ENCODE measurements at regions of chr10 and their contacts with region 1.

Region 1: GRCh38 chr10:102283488-102283887 is 38.2 kb downstream of the GBF1 start:
- DNase-seq: peak; percentile 40
- H3K4me3 Mint-ChIP-seq: peak overlapping the region; percentile 46
- H3K27ac Mint-ChIP-seq: peak overlapping the region; percentile 93
- H3K4me1 Mint-ChIP-seq: peaks cover 85% of the 10 kb centered on the region
- H3K27me3 Mint-ChIP-seq: no peaks in the 10 kb centered on the region

Region 2: GRCh38 chr10:102153093-102153620 is 130.3 kb before region 1 on chr10:
- CTCF ChIA-PET with region 1: no interaction called
- POLR2A ChIA-PET with region 1: no interaction called
- intact Hi-C with region 1: no loop called
- DNase-seq: no peak
- H3K4me3 Mint-ChIP-seq: peak overlapping the region; percentile 96
- H3K27ac Mint-ChIP-seq: peak overlapping the region; percentile 98
- H3K4me1 Mint-ChIP-seq: peaks cover 60% of the 10 kb centered on the region
- H3K27me3 Mint-ChIP-seq: no peaks in the 10 kb centered on the region

Region 3: GRCh38 chr10:102185811-102186527 is 97.5 kb before region 1 on chr10:
- CTCF ChIA-PET with region 1: no interaction called
- POLR2A ChIA-PET with region 1: no interaction called
- intact Hi-C with region 1: loop called (anchors 5 kb)
- DNase-seq: no peak
- H3K4me3 Mint-ChIP-seq: no peak overlapping the region
- H3K27ac Mint-ChIP-seq: no peak overlapping the region
- H3K4me1 Mint-ChIP-seq: peaks cover 14% of the 10 kb centered on the region
- H3K27me3 Mint-ChIP-seq: no peaks in the 10 kb centered on the region

Region 4: DNA sequence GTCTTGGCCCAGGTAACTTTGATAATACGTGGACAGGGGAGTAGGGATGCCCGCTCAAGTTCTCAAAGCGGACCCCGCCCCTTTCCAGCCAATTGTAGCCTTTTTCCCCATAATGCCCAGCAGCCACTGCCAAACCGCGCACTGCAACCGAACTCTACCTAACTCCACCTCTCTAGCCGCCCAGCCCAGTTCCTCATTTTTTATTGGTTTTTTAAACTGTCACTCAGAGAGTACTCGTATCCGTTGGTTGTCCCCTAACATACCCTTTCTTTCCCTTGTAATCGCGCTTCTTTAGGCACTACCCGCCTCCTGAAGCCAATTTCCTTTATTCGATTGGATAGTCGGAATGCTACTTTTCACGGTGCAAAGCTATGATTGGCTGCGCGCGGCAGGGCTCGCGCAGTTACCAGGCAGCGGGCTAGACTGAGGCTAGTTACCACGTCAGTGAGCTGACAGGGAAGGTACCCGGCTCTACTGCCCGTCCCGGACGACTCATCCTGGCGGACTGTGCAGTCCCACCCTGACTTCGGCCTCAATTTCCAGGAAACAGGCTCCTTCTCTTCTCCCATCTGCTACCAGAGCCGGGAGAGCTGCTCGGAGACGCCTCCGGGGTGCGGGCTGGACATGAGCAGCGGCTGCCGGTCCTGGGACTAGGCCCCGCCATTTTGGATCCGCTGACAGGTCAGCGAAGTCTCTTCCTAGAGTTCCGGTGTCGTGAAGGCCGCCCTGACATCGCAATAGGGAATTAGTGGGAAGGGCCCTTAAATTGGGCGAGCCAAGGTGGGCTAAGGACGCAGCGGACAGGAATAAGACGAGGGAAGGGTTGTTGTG is 38.2 kb before region 1 on chr10 and contains the start of gene GBF1:
- CTCF ChIA-PET with region 1: interaction called, 7 read pairs
- POLR2A ChIA-PET with region 1: interaction called, 8 read pairs
- intact Hi-C with region 1: loop called (anchors 2 kb)
- DNase-seq: peak; percentile 95
- H3K4me3 Mint-ChIP-seq: peak within 1 kb of the TSS; percentile 100
- H3K27ac Mint-ChIP-seq: peak within 1 kb of the TSS; percentile 95
- H3K4me1 Mint-ChIP-seq: peaks cover 51% of the 10 kb centered on the region
- H3K27me3 Mint-ChIP-seq: peaks cover 15% of the 10 kb centered on the region
- total RNA-seq, gene GBF1: 42.2 to 44.0 TPM

Region 5: GRCh38 chr10:102268375-102268888 is 15.1 kb before region 1 on chr10:
- CTCF ChIA-PET with region 1: interaction called, 13 read pairs
- POLR2A ChIA-PET with region 1: interaction called, 63 read pairs
- intact Hi-C with region 1: loop called (anchors 1 kb)
- DNase-seq: no peak
- H3K4me3 Mint-ChIP-seq: peak overlapping the region; percentile 41
- H3K27ac Mint-ChIP-seq: peak overlapping the region; percentile 97
- H3K4me1 Mint-ChIP-seq: peaks cover 73% of the 10 kb centered on the region
- H3K27me3 Mint-ChIP-seq: no peaks in the 10 kb centered on the region

Region 6: DNA sequence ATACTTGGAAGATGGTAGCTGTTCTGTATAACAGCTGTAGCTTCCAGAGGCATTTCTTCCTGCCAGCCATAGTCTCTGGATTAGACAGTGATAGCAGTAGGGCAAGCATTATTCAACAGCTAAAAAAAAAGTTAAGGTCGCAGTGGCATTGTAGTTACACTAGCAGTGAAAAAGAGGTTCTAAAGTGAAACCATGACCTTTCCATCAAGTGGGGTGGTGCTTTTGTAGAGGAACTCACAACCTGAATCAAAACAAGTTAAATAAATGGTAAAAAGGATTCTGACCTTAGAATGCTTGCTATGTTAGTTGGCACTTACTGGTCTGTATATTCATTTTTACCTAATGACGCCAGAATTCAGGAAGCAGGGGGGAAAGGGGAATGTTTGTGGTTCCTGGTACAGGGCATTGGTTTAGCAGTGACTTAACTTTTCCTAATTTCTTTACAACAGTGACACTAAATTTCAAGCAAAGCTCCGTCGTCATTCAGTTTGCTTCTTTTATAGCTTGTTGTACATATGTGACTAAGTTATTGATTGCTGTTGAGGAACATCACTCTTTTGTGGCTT is 16.9 kb after region 1 on chr10:
- CTCF ChIA-PET with region 1: interaction called, 4 read pairs
- POLR2A ChIA-PET with region 1: interaction called, 7 read pairs
- intact Hi-C with region 1: loop called (anchors 1 kb)
- DNase-seq: no peak
- H3K4me3 Mint-ChIP-seq: peak overlapping the region; percentile 23
- H3K27ac Mint-ChIP-seq: peak overlapping the region; percentile 86
- H3K4me1 Mint-ChIP-seq: peaks cover 32% of the 10 kb centered on the region
- H3K27me3 Mint-ChIP-seq: no peaks in the 10 kb centered on the region

Region 7: DNA sequence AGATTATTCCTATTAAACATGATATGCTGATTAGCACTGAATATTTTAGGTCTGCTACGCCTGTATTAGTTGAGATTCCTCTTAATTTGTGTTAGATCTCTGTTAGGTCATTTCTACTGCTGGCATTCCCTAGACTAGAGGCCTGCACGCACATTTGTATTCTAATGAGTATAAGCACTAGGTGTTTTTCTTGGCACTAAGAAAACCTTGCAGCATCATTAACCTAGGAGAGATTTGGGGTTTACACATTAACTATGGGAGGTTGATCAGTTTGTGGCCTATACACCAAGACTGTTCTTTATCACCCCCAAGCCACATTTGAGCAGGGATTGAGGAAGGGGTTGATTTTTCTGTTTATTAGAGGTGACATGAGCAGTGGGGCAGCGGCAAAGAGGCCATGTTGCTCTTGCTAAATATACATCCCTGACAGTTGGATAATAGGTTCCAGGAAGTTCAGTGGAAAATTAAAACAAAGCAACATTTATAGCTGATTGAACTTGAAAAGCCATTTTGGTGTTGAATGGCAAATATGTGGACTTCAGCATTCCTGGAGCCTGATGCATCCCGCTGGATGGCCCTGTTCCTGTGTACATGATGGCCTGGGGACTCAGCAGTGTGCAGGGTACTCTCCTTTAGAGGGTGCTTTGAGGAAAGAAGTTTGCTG is 27.0 kb after region 1 on chr10:
- CTCF ChIA-PET with region 1: no interaction called
- POLR2A ChIA-PET with region 1: interaction called, 6 read pairs
- intact Hi-C with region 1: loop called (anchors 1 kb)
- DNase-seq: no peak
- H3K4me3 Mint-ChIP-seq: no peak overlapping the region
- H3K27ac Mint-ChIP-seq: no peak overlapping the region
- H3K4me1 Mint-ChIP-seq: peaks cover 56% of the 10 kb centered on the region
- H3K27me3 Mint-ChIP-seq: no peaks in the 10 kb centered on the region

Region 8: GRCh38 chr10:102342958-102343357 is 59.5 kb after region 1 on chr10:
- CTCF ChIA-PET with region 1: interaction called, 5 read pairs
- POLR2A ChIA-PET with region 1: interaction called, 9 read pairs
- intact Hi-C with region 1: loop called (anchors 1 kb)
- DNase-seq: no peak
- H3K4me3 Mint-ChIP-seq: no peak overlapping the region
- H3K27ac Mint-ChIP-seq: peak overlapping the region; percentile 60
- H3K4me1 Mint-ChIP-seq: peaks cover 39% of the 10 kb centered on the region
- H3K27me3 Mint-ChIP-seq: no peaks in the 10 kb centered on the region